ENCODE measurements at regions of chr2 and their contacts with region 1.

Region 1: GRCh38 chr2:177332041-177332991 is 60.3 kb upstream of the AGPS start:
- DNase-seq: peak in 1 of 3 donors; percentile 74
- ATAC-seq: peak; percentile 85
- H3K4me3 ChIP-seq: no peak overlapping the region
- H3K4me1 ChIP-seq: peaks cover 3% of the 10 kb centered on the region
- CTCF ChIP-seq: no peak

Region 2: DNA sequence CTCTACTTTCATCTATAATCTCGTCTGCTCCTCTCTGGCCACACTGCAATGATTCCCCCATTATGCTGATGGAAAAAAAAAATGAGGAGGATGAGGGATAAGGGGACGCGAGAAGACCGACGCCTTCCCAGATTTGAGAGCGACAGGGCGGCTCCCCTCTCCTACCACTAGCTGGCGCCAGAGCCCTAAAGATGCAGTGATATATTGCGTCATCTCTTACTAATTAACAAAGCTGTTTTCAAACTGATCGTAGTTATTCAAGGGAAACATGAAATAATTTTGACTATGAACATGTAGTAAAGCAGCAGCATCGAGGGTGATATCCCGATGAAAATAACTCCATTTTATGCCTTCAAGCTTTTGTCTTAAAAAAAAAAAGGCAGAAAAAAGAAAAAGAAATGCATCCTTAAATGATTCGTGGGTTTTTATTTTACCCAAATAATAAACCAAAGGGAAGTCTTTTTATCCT is 167.7 kb before region 1 on chr2:
- intact Hi-C with region 1: loop called (anchors 5 to 10 kb)
- DNase-seq: peak; percentile 77 to 92 (median 87)
- ATAC-seq: peak; percentile 84
- H3K4me3 ChIP-seq: no peak overlapping the region
- H3K4me1 ChIP-seq: peaks cover 24% of the 10 kb centered on the region
- CTCF ChIP-seq: peak; percentile 96

Region 3: DNA sequence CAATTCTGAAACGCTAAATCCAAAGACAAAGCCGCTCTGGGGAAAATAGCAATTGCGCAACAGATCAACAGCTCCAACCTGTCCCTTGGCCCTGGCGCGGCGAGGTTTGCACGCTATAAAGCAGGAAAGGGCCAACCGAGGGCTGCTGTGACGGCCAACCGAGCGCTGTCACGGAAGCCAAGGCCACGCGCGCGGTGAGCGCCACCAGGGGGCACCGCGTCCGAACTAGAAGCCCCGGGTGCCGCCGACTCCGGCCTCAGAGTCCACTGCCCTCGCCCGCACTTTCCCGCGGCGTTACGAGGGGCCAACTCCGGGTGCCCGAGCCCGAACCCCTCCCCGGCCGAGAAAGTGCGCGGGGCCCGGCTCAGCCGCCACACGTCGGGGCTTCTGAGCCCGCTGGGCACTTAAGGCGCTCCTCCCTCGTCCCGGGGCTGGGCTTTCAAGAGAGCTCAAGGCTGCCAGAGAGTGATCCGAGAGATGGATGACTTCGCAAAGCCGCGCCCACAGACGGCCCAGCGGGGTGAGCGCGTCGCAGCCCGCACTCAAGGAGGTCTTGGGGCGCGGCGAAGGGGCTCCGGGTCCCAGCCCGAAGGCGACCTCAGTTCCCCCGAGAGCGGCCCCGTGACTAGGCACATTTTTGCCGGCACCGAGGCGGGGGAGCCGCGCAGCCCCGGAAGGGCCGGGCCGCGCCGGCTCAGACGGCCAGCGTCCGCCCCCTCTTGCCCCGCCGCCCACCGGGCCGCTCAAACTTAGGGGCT is 68.7 kb before region 1 on chr2:
- intact Hi-C with region 1: loop called in 1 of 2 experiments (anchors 2 kb)
- DNase-seq: peak; percentile 98 to 100 (median 100)
- ATAC-seq: peak; percentile 83
- H3K4me3 ChIP-seq: peak overlapping the region; percentile 100
- H3K4me1 ChIP-seq: peaks cover 34% of the 10 kb centered on the region
- CTCF ChIP-seq: peak; percentile 80

Region 4: DNA sequence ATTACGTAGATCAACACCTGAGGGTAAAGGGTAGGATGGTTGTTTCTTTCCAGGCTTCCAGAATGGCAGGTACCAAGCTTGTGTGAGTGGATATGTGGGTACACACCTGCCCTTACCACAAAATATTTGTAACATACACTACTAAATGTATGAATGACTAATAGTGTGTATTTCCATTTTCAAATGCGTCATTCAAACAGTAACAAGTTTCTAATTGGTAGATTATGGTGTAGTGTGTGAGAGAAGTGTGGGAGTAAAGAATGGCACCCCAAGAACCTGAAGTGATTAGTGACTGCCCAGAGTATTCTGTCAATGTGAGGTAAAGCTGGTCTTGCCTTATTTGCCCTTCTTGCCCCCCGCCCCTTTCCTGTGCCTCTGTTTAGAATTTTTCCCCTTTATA is 81.4 kb after region 1 on chr2:
- intact Hi-C with region 1: loop called (anchors 5 to 10 kb)
- DNase-seq: no peak
- ATAC-seq: no peak
- H3K4me3 ChIP-seq: no peak overlapping the region
- H3K4me1 ChIP-seq: no peaks in the 10 kb centered on the region
- CTCF ChIP-seq: no peak

Region 5: GRCh38 chr2:177419274-177419673 is 87.0 kb after region 1 on chr2:
- intact Hi-C with region 1: loop called (anchors 5 to 10 kb)
- DNase-seq: no peak
- ATAC-seq: peak; percentile 29
- H3K4me3 ChIP-seq: no peak overlapping the region
- H3K4me1 ChIP-seq: no peaks in the 10 kb centered on the region
- CTCF ChIP-seq: no peak

Region 6: GRCh38 chr2:178223806-178224205 is 891.5 kb after region 1 on chr2:
- intact Hi-C with region 1: no loop called
- DNase-seq: no peak
- ATAC-seq: no peak
- H3K4me3 ChIP-seq: no peak overlapping the region
- H3K4me1 ChIP-seq: no peaks in the 10 kb centered on the region
- CTCF ChIP-seq: no peak